OCI-LY7 (cell line): ENCODE measurements at regions of chr21 and their contacts with region 1.

Region 1: GRCh38 chr21:45130324-45130774 is 56.0 kb downstream of the ADARB1 start:
- DNase-seq: no peak
- H3K4me3 ChIP-seq: no peak overlapping the region
- H3K27ac ChIP-seq: no peak overlapping the region
- H3K4me1 ChIP-seq: peaks cover 22% of the 10 kb centered on the region
- CTCF ChIP-seq: no peak

Region 2: DNA sequence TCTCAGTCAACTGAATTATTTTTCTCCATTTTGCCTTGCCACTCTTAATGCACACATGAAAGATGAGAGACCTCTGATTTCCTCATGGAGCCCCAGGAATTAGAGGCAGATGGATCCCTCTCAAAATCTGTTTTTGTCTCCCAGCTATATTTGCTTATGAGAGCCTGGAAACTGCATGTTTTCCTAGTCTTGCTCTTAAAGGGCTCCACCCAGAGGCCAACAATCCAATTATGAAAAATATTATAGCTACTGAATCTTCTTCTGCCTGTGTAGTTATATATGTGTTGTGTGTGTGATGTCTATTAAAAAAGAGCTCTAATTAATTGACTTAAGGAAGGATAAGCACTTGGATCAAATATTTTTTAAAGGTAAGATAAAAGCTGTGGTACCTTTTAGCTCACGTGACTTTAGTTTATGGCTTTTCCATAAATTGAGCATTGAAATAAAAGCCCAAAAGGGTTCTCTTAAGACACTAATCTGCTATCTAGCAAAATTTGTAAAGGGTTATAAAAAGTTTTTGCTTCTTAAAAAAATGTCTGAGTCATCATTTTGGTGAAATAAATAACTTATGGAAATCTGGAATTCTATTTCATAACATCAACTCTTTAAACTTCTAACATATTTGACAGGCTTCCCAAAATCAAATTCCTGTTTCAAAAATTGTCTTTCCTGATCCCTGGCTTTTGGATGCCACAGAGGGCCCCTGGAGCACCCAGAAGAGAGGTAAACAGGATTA is 387.8 kb before region 1 on chr21:
- CTCF ChIA-PET with region 1: no interaction called
- POLR2A ChIA-PET with region 1: no interaction called
- intact Hi-C with region 1: no loop called
- DNase-seq: peak; percentile 10
- H3K4me3 ChIP-seq: no peak overlapping the region
- H3K27ac ChIP-seq: no peak overlapping the region
- H3K4me1 ChIP-seq: no peaks in the 10 kb centered on the region
- CTCF ChIP-seq: peak; percentile 62

Region 3: DNA sequence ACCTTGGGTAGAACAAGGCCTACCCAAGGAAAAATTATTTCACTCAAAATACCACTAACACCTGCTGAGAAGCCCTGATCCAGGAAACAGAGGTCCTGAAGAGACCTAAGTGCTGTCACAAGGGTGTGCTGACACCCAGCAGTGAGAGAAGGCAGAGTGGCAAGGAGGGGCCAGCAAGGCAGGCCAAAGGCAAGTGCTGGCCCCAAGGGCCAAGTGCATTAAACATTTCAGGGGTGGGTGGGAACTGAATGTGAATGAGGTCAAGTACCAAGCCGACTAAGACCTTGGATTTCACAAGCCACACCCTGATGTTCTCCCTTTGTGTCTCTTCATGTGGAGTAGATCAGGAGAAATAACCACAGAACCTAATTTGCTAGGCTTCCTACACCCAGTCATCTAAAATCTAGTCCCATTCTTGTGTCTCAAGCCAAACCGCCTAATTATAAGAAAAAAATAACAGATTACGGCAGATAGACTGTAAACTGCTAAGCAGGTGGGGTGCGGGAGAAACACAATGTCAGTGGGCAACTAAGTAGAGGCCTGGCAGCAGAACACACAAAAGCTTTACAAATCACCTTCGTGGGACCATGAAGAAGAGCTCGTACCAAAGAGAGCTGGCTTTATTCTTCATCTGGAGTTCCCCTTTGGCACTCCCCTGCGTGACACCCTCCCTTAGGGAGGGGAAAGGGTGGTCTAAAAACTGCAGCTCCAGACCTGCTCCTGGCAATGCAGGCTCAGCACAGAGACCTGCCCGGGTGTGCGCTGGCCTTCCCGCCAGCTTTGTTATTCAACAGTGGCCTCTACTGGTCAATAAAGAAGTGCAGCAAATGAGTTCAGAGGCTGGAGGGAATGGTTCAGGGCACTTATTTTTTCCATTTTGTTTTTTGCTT is 337.4 kb before region 1 on chr21:
- CTCF ChIA-PET with region 1: no interaction called
- POLR2A ChIA-PET with region 1: no interaction called
- intact Hi-C with region 1: loop called (anchors 10 kb)
- DNase-seq: peak; percentile 52
- H3K4me3 ChIP-seq: no peak overlapping the region
- H3K27ac ChIP-seq: no peak overlapping the region
- H3K4me1 ChIP-seq: peaks cover 24% of the 10 kb centered on the region
- CTCF ChIP-seq: peak; percentile 85

Region 4: GRCh38 chr21:45074048-45074817 is 56.1 kb before region 1 on chr21 and contains the start of gene ADARB1:
- CTCF ChIA-PET with region 1: no interaction called
- POLR2A ChIA-PET with region 1: interaction called, 4 read pairs
- intact Hi-C with region 1: loop called (anchors 1 kb)
- DNase-seq: peak; percentile 85
- H3K4me3 ChIP-seq: peak within 1 kb of the TSS; percentile 98
- H3K27ac ChIP-seq: no peak within 1 kb of the TSS
- H3K4me1 ChIP-seq: no peaks in the 10 kb centered on the region
- CTCF ChIP-seq: no peak
- total RNA-seq, gene ADARB1: 6.6 and 17.4 TPM in 2 replicates

Region 5: GRCh38 chr21:45104560-45104959 is 25.8 kb before region 1 on chr21:
- CTCF ChIA-PET with region 1: interaction called, 21 read pairs
- POLR2A ChIA-PET with region 1: interaction called, 116 read pairs
- intact Hi-C with region 1: loop called (anchors 1 kb)
- DNase-seq: no peak
- H3K4me3 ChIP-seq: no peak overlapping the region
- H3K27ac ChIP-seq: no peak overlapping the region
- H3K4me1 ChIP-seq: peaks cover 56% of the 10 kb centered on the region
- CTCF ChIP-seq: no peak

Region 6: GRCh38 chr21:45140346-45140940 is 10.1 kb after region 1 on chr21:
- CTCF ChIA-PET with region 1: interaction called, 12 read pairs
- POLR2A ChIA-PET with region 1: interaction called, 4 read pairs
- intact Hi-C with region 1: no loop called
- DNase-seq: peak; percentile 84
- H3K4me3 ChIP-seq: no peak overlapping the region
- H3K27ac ChIP-seq: no peak overlapping the region
- H3K4me1 ChIP-seq: no peaks in the 10 kb centered on the region
- CTCF ChIP-seq: peak; percentile 88